ENCODE measurements at regions of chr15 and their contacts with region 1.

Region 1: DNA sequence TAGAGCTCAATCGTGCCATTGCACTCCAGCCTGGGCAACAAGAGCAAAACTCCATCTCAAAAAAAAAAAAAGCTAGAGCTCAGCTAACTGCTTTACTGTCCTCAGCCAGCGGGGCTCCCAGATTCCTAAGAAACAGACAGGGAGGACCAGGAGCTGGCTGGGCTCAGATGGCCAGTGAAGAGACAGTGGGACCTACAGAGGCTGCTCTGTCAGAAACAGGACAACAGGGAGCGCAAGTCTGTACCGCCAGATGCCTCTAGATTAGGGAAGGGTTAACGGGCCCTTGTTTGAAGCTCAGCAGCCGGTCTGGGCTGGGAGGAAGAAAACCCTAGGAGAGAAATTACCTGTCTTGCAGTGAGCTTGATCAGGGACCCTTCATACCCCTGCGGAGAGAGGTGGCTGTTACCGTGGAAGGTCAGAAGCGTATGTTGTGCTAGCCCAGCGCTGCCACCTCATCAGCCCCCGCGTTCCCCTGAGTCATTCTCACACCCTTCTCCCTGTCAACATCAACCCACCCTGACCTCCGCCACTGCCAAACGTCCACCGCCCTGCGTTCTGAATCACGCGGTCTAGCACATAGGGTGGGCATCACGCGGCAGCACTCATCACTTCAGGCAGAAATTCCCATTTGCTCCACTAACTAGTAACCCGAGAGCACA is 25.3 kb downstream of the RBPMS2 start:
- DNase-seq: no peak
- ATAC-seq: no peak
- H3K4me3 ChIP-seq: no peak overlapping the region
- H3K4me3 Mint-ChIP-seq: no peak overlapping the region
- H3K27ac ChIP-seq: no peak overlapping the region
- H3K27ac Mint-ChIP-seq: no peak overlapping the region
- H3K4me1 ChIP-seq: no peaks in the 10 kb centered on the region
- H3K4me1 Mint-ChIP-seq: no peaks in the 10 kb centered on the region
- H3K27me3 ChIP-seq: peaks cover 0 to 3% of the 10 kb centered on the region in 2 experiments
- H3K27me3 Mint-ChIP-seq: peaks cover 10% of the 10 kb centered on the region
- CTCF ChIP-seq: no peak

Region 2: DNA sequence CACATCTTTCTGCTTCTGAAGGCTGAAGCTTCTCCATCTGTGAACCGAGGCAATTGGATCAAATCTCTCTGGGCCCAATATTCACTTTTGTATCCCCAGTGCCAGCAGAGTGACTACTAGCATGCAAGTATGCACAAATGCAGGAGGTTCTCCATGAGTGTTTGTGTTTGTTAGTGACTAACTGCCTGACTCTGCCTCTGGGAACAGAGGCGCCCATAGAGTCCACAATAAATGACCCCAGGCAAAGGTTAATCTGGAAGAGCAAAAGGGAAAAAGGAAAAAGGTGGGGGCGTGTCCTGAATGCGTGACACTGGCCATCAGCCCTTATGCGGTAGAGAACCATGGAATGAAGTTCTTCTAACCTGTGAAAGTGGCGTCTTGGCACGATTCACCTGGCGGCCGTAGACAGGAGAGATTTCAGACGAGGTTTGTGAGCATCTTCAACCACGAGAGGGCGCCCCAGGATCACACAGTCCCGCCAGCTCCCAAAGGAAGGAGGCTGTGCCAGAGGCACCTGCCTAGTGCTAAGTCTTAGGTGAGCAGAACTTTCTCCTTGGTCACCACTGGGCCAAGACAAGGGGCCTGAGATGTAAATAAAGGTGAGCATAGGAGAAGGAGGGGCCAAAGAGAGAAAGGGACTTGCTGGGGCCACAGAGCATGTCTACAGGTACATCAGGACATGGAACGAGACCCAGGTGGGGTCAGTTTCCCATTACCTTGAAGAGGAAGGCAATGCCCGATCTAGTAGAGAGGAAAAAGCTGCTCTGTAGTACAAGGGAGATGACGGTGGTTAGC is 18.9 kb before region 1 on chr15:
- CTCF ChIA-PET with region 1: no interaction called
- POLR2A ChIA-PET with region 1: no interaction called
- intact Hi-C with region 1: no loop called
- DNase-seq: peak; percentile 76 to 94 (median 85)
- ATAC-seq: peak; percentile 80
- H3K4me3 ChIP-seq: no peak overlapping the region
- H3K4me3 Mint-ChIP-seq: no peak overlapping the region
- H3K27ac ChIP-seq: no peak overlapping the region
- H3K27ac Mint-ChIP-seq: no peak overlapping the region
- H3K4me1 ChIP-seq: peaks cover 9% of the 10 kb centered on the region
- H3K4me1 Mint-ChIP-seq: peaks cover 8% of the 10 kb centered on the region
- H3K27me3 ChIP-seq: no peaks in the 10 kb centered on the region
- H3K27me3 Mint-ChIP-seq: peaks cover 9% of the 10 kb centered on the region
- CTCF ChIP-seq: peak; percentile 85

Region 3: DNA sequence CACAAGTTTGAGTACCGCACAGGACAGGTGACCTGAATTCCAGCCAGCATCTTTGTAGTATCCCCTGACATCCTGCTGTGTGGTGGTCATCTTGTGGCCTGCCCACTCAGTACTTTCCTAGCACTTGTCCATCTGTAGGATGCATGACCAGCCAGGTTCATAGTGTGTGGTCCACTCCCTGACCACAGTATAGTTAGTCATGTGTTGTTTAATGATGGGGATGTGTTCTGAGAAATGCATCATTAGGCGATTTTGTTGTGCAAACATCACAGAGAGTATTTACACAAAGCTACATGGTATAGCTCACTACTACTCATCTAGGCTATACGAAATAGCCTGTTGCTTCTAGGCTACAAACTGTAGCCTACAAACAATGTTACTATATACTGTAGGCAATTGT is 42.2 kb after region 1 on chr15:
- CTCF ChIA-PET with region 1: no interaction called
- POLR2A ChIA-PET with region 1: no interaction called
- intact Hi-C with region 1: loop called in 1 of 2 experiments (anchors 5 kb)
- DNase-seq: no peak
- ATAC-seq: no peak
- H3K4me3 ChIP-seq: no peak overlapping the region
- H3K4me3 Mint-ChIP-seq: no peak overlapping the region
- H3K27ac ChIP-seq: no peak overlapping the region
- H3K27ac Mint-ChIP-seq: no peak overlapping the region
- H3K4me1 ChIP-seq: no peaks in the 10 kb centered on the region
- H3K4me1 Mint-ChIP-seq: no peaks in the 10 kb centered on the region
- H3K27me3 ChIP-seq: no peaks in the 10 kb centered on the region
- H3K27me3 Mint-ChIP-seq: no peaks in the 10 kb centered on the region
- CTCF ChIP-seq: no peak

Measured in CD4-positive, alpha-beta T cell (primary cell).